PC-9 (cell line): ENCODE measurements at regions of chr4 and their contacts with region 1.

Region 1: GRCh38 chr4:168685136-168685809 is 188.4 kb downstream of the PALLD start:
- DNase-seq: no peak
- H3K4me3 ChIP-seq: no peak overlapping the region
- H3K27ac ChIP-seq: no peak overlapping the region
- H3K4me1 ChIP-seq: no peaks in the 10 kb centered on the region
- H3K27me3 ChIP-seq: no peaks in the 10 kb centered on the region
- CTCF ChIP-seq: no peak

Region 2: GRCh38 chr4:168907119-168907698 is 221.9 kb after region 1 on chr4:
- CTCF ChIA-PET with region 1: interaction called, 12 read pairs
- POLR2A ChIA-PET with region 1: no interaction called
- intact Hi-C with region 1: no loop called
- DNase-seq: no peak
- H3K4me3 ChIP-seq: no peak overlapping the region
- H3K27ac ChIP-seq: no peak overlapping the region
- H3K4me1 ChIP-seq: no peaks in the 10 kb centered on the region
- H3K27me3 ChIP-seq: no peaks in the 10 kb centered on the region
- CTCF ChIP-seq: no peak